ENCODE measurements at regions of chr10 and their contacts with region 1.

Region 1: DNA sequence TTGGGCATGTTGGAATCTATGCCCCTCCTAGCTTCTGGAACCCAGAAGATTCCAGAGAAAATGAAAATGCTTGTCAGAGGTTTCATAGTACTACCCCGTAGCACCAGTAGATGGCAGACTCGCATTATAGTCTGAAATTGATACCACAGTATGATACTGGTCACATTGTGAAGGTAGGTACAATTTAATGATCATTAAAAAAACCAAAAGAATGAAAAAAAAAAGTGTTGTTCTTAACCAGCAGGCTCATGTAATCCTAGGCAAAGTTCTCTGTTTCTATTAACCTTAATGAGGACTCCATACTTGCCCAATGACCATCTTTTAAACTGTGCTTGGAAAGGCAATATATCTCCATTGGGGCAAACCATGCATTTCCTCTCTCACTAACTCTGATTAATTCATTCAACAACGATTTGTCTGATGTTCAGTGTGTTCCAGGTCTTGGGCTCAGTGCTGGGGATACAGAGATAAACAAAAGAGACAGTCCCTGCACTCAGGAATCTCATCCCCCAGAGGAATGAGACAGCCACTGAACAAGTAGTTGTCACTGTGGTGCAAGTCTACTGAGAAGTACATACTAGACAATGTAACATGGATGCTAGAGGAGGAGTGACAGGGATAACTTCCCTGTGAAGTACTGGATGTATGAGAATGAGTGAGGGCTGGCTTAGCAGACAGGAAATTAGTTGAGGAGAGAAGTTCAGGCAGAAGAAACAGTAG is 223.5 kb upstream of the PHYHIPL start:
- DNase-seq: peak; percentile 29
- ATAC-seq: no peak
- H3K4me3 Mint-ChIP-seq: no peak overlapping the region
- H3K27ac Mint-ChIP-seq: no peak overlapping the region
- H3K4me1 Mint-ChIP-seq: no peaks in the 10 kb centered on the region
- H3K27me3 Mint-ChIP-seq: peaks cover 3% of the 10 kb centered on the region

Region 2: GRCh38 chr10:58867683-58868082 is 85.2 kb before region 1 on chr10:
- CTCF ChIA-PET with region 1: no interaction called
- POLR2A ChIA-PET with region 1: no interaction called
- intact Hi-C with region 1: no loop called
- DNase-seq: no peak
- ATAC-seq: no peak
- H3K4me3 Mint-ChIP-seq: no peak overlapping the region
- H3K27ac Mint-ChIP-seq: no peak overlapping the region
- H3K4me1 Mint-ChIP-seq: no peaks in the 10 kb centered on the region
- H3K27me3 Mint-ChIP-seq: no peaks in the 10 kb centered on the region

Region 3: DNA sequence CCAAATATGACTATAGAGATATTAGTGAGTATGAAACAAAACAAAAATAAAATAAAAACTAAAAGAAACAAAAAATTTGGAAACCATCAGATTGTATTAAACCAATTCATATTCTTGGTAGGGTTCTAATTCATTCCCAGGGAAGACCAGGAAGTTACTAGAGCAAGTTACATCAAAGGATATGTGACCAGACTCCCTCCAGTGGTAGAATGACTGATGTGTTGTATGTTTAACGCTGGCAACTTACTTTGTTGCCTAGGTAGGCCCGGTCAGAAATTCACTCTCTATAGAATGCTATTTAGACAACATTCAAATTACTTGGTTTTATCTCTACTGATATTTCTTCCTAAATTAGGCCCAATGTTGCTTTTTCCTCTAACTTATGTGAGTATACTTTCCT is 228.8 kb after region 1 on chr10:
- CTCF ChIA-PET with region 1: no interaction called
- POLR2A ChIA-PET with region 1: no interaction called
- intact Hi-C with region 1: loop called (anchors 2 to 5 kb)
- DNase-seq: no peak
- ATAC-seq: no peak
- H3K4me3 Mint-ChIP-seq: no peak overlapping the region
- H3K27ac Mint-ChIP-seq: no peak overlapping the region
- H3K4me1 Mint-ChIP-seq: peaks cover 5% of the 10 kb centered on the region
- H3K27me3 Mint-ChIP-seq: peaks cover 8% of the 10 kb centered on the region

Region 4: DNA sequence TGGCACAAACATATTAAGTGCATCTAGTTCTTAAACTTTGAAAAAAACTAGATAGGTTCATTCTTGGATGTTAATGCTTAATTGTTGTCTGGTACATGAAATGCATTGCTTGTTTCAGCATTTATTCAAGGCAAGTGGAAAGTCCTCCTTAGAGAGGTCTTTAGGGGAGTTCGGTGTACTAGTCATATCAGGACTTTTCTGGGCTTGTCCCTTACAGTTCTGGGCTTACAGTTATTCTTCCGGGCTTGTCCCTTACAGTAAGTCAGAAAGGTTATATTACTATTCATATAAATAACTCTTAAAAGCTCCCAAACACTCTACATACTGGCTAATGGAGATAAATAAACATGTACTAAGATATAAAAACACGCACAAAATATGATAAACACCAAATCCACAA is 862.0 kb after region 1 on chr10:
- CTCF ChIA-PET with region 1: no interaction called
- POLR2A ChIA-PET with region 1: no interaction called
- intact Hi-C with region 1: loop called in 1 of 2 experiments (anchors 5 kb)
- DNase-seq: no peak
- ATAC-seq: no peak
- H3K4me3 Mint-ChIP-seq: no peak overlapping the region
- H3K27ac Mint-ChIP-seq: no peak overlapping the region
- H3K4me1 Mint-ChIP-seq: peaks cover 18% of the 10 kb centered on the region
- H3K27me3 Mint-ChIP-seq: no peaks in the 10 kb centered on the region

Measured in activated CD4-positive, alpha-beta T cell treated with anti-CD3 and anti-CD28 coated beads for 36 hours (primary cell).